ENCODE measurements at regions of chr10 and their contacts with region 1.

Region 1: GRCh38 chr10:6088721-6089390 is at the start of gene RBM17:
- DNase-seq: peak; percentile 98
- H3K4me3 Mint-ChIP-seq: peak within 1 kb of the TSS; percentile 95
- H3K27ac Mint-ChIP-seq: peak within 1 kb of the TSS; percentile 88
- H3K4me1 Mint-ChIP-seq: peaks cover 63% of the 10 kb centered on the region
- H3K27me3 Mint-ChIP-seq: no peaks in the 10 kb centered on the region
- total RNA-seq, gene RBM17: 265 and 283 TPM in 2 replicates

Region 2: DNA sequence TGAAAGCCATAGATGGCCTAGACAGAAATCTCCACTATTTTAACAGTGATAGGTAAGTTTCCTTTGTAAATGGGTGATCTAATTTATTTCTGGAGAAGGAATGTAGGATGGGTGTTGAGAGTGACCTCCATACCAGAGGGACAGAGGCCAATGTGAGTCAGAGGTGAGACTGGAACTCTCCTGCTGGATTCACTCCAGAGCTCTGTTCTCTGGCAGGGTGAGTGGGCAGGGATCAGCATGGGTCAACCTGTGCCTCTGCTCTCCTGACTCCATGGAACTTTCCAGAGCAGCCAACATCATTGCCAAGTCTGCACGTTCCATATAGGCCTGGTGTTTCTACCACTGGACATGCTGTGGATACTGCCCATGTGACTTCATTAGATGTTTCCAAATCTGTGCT is 983.2 kb before region 1 on chr10:
- intact Hi-C with region 1: no loop called
- DNase-seq: no peak
- H3K4me3 Mint-ChIP-seq: no peak overlapping the region
- H3K27ac Mint-ChIP-seq: no peak overlapping the region
- H3K4me1 Mint-ChIP-seq: no peaks in the 10 kb centered on the region
- H3K27me3 Mint-ChIP-seq: no peaks in the 10 kb centered on the region

Region 3: DNA sequence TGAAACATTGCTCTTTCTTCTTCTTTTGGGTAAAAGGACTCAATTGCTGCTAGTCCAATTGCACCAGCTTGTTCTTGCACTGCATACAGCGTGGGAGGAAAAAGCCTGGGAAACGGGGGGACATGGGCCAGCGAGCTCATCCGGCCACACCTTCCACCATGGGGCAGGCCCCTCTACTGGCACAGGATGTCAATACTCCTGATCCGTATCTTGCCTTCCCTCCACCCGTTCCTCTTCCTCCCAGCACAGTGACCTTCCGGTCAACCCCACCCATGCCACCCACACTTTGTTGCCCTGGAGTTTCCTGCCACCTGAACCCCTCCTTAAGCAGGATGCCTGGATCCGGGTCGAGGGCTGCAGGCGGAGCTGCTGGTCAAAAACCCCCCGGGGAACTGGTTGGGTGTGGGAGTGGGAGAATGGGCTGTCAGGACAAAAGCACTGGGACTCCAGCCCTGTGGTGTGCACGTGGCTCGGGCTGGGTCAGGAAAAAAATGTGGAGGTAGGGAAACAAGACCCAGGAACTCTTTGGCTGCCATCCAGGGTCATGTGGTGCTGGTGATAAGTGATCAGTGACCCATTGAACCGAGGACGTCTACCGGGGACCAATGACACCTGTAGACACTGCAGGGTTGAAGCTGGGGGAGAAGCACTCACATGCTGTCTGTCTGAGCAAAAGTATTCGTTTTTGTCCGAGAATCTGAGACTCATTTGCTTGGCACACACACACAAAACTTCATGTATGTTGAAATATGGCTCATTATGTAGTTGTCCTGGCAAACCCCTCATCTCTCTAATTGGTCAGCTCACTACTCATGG is 34.8 kb before region 1 on chr10:
- intact Hi-C with region 1: no loop called
- DNase-seq: no peak
- H3K4me3 Mint-ChIP-seq: peak overlapping the region; percentile 84
- H3K27ac Mint-ChIP-seq: peak overlapping the region; percentile 99
- H3K4me1 Mint-ChIP-seq: peaks cover 90% of the 10 kb centered on the region
- H3K27me3 Mint-ChIP-seq: no peaks in the 10 kb centered on the region

Region 4: DNA sequence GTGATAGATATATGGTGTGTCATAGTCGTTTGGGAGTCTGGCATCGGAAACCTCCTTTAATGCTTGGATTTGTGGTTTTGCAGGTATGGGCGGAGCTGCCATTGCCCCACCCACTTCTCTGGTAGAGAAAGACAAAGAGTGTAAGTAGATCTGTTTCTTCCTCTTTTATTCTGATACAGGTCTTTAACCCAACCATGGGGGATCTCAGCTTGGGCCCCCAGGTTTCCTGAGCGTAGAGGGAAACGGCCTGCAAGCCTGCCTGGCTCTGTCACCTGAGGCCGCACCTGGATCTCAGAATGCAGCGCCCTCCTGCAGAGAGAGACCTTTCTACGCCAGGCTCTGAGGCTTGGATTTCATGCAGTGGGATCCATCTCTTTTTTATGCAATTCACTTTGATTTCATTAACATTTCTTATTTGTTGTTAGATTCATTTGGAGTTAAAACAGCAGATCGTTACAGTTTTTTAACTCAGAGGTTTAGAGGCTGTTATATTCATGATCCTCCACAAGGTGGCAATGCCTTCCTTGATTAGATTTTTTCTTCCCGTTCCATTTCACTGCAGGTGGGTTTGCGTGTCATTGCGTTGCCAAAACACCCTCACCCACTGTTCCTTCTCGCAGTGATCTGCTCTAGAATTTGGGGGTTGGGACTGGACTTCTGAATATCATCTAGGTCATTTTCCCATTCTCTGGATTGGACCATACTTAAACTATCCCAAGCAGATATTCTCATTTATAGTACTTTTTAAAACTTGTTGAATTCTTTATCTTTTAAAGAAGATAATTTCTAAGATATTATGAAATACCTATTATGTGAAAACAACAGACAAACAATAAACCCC is 20.0 kb after region 1 on chr10:
- intact Hi-C with region 1: loop called (anchors 1 kb)
- DNase-seq: peak; percentile 22
- H3K4me3 Mint-ChIP-seq: no peak overlapping the region
- H3K27ac Mint-ChIP-seq: peak overlapping the region; percentile 59
- H3K4me1 Mint-ChIP-seq: peaks cover 56% of the 10 kb centered on the region
- H3K27me3 Mint-ChIP-seq: no peaks in the 10 kb centered on the region

Measured in activated T-helper 1 cell treated with anti-CD3 and anti-CD28 coated beads, Interleukin-12 subunit alpha, Interleukin-12 subunit beta, Interleukin-2, Interleukin-4 antibody, amounts not matched to agents 30 ng/mL and 10 ng/mL and 1 ng/mL, durations not matched to agents 14 hours and 24 hours and 36 hours (primary cell).